ENCODE measurements at regions of chr17 and their contacts with region 1.

Region 1: GRCh38 chr17:43360739-43361505 is 37.9 kb upstream of the ARL4D start:
- DNase-seq: peak; percentile 74 to 99 (median 86)
- ATAC-seq: peak; percentile 75
- H3K4me3 ChIP-seq: peak overlapping the region; percentile 63
- H3K4me3 Mint-ChIP-seq: peak overlapping the region; percentile 93
- H3K27ac ChIP-seq: peak overlapping the region; percentile 94 to 96
- H3K27ac Mint-ChIP-seq: peak overlapping the region; percentile 97
- H3K4me1 ChIP-seq: peaks cover 22% of the 10 kb centered on the region
- H3K4me1 Mint-ChIP-seq: peaks cover 15% of the 10 kb centered on the region
- H3K27me3 ChIP-seq: no peaks in the 10 kb centered on the region
- H3K27me3 Mint-ChIP-seq: peaks cover 5% of the 10 kb centered on the region
- CTCF ChIP-seq: no peak

Region 2: DNA sequence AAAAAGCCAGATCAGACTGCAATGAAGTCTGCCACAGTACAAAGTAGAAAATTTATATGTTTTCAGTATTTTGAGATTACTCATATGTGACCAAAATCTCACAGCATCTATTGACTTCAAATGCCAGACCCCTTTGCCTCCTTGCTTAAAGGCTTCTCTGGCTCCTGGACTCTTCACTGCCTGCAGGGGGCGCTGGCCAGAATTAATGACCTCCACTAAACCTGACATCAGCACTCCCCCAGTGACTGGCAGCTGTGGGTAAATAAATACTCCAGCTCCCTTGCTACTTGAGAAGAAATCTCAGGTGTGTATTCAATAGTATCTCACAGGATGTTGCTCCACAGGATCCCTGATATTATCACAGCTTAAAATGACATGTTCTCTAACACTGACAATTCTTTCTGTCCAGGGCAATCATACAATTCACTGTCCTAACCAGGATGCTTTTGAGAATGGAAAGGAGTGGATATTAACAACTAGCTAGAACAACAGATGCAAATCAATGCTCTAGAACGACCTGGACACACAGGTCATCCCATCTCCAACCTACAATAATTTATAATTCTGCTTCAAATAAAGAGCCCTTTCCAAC is 540.9 kb before region 1 on chr17:
- CTCF ChIA-PET with region 1: interaction called, 4 read pairs
- POLR2A ChIA-PET with region 1: interaction called, 8 read pairs
- intact Hi-C with region 1: loop called in 1 of 2 experiments (anchors 10 kb)
- DNase-seq: peak; percentile 29 to 79 (median 48)
- ATAC-seq: no peak
- H3K4me3 ChIP-seq: no peak overlapping the region
- H3K4me3 Mint-ChIP-seq: peak overlapping the region; percentile 43
- H3K27ac ChIP-seq: no peak overlapping the region
- H3K27ac Mint-ChIP-seq: peak overlapping the region; percentile 49
- H3K4me1 ChIP-seq: peaks cover 22% of the 10 kb centered on the region
- H3K4me1 Mint-ChIP-seq: peaks cover 28% of the 10 kb centered on the region
- H3K27me3 ChIP-seq: no peaks in the 10 kb centered on the region
- H3K27me3 Mint-ChIP-seq: no peaks in the 10 kb centered on the region
- CTCF ChIP-seq: peak; percentile 72

Region 3: GRCh38 chr17:43024407-43025289 is 336.3 kb before region 1 on chr17 and contains the start of gene RND2:
- CTCF ChIA-PET with region 1: no interaction called
- POLR2A ChIA-PET with region 1: interaction called, 24 read pairs
- intact Hi-C with region 1: no loop called
- DNase-seq: peak; percentile 60 to 91 (median 71)
- ATAC-seq: peak; percentile 56
- H3K4me3 ChIP-seq: peak within 1 kb of the TSS; percentile 74
- H3K4me3 Mint-ChIP-seq: peak within 1 kb of the TSS; percentile 90
- H3K27ac ChIP-seq: peak within 1 kb of the TSS in 1 of 2 donors; percentile 56
- H3K27ac Mint-ChIP-seq: peak within 1 kb of the TSS; percentile 77
- H3K4me1 ChIP-seq: peaks cover 48% of the 10 kb centered on the region
- H3K4me1 Mint-ChIP-seq: peaks cover 28% of the 10 kb centered on the region
- H3K27me3 ChIP-seq: no peaks in the 10 kb centered on the region
- H3K27me3 Mint-ChIP-seq: no peaks in the 10 kb centered on the region
- CTCF ChIP-seq: peak; percentile 21
- total RNA-seq, gene RND2: 0.27 to 0.28 TPM

Region 4: GRCh38 chr17:43134774-43135453 is 226.0 kb before region 1 on chr17:
- CTCF ChIA-PET with region 1: no interaction called
- POLR2A ChIA-PET with region 1: no interaction called
- intact Hi-C with region 1: no loop called
- DNase-seq: no peak
- ATAC-seq: no peak
- H3K4me3 ChIP-seq: no peak overlapping the region
- H3K4me3 Mint-ChIP-seq: no peak overlapping the region
- H3K27ac ChIP-seq: no peak overlapping the region
- H3K27ac Mint-ChIP-seq: no peak overlapping the region
- H3K4me1 ChIP-seq: no peaks in the 10 kb centered on the region
- H3K4me1 Mint-ChIP-seq: peaks cover 11% of the 10 kb centered on the region
- H3K27me3 ChIP-seq: no peaks in the 10 kb centered on the region
- H3K27me3 Mint-ChIP-seq: no peaks in the 10 kb centered on the region
- CTCF ChIP-seq: no peak

Region 5: GRCh38 chr17:43170766-43171585 is 189.9 kb before region 1 on chr17 and contains the start of gene NBR1:
- CTCF ChIA-PET with region 1: no interaction called
- POLR2A ChIA-PET with region 1: interaction called, 18 read pairs
- intact Hi-C with region 1: no loop called
- DNase-seq: peak; percentile 90 to 99 (median 92)
- ATAC-seq: peak; percentile 76
- H3K4me3 ChIP-seq: peak within 1 kb of the TSS; percentile 71
- H3K4me3 Mint-ChIP-seq: no peak within 1 kb of the TSS
- H3K27ac ChIP-seq: peak within 1 kb of the TSS; percentile 98
- H3K27ac Mint-ChIP-seq: no peak within 1 kb of the TSS
- H3K4me1 ChIP-seq: peaks cover 47% of the 10 kb centered on the region
- H3K4me1 Mint-ChIP-seq: peaks cover 27% of the 10 kb centered on the region
- H3K27me3 ChIP-seq: no peaks in the 10 kb centered on the region
- H3K27me3 Mint-ChIP-seq: no peaks in the 10 kb centered on the region
- CTCF ChIP-seq: no peak
- total RNA-seq, gene NBR1: 23.7 TPM

Region 6: DNA sequence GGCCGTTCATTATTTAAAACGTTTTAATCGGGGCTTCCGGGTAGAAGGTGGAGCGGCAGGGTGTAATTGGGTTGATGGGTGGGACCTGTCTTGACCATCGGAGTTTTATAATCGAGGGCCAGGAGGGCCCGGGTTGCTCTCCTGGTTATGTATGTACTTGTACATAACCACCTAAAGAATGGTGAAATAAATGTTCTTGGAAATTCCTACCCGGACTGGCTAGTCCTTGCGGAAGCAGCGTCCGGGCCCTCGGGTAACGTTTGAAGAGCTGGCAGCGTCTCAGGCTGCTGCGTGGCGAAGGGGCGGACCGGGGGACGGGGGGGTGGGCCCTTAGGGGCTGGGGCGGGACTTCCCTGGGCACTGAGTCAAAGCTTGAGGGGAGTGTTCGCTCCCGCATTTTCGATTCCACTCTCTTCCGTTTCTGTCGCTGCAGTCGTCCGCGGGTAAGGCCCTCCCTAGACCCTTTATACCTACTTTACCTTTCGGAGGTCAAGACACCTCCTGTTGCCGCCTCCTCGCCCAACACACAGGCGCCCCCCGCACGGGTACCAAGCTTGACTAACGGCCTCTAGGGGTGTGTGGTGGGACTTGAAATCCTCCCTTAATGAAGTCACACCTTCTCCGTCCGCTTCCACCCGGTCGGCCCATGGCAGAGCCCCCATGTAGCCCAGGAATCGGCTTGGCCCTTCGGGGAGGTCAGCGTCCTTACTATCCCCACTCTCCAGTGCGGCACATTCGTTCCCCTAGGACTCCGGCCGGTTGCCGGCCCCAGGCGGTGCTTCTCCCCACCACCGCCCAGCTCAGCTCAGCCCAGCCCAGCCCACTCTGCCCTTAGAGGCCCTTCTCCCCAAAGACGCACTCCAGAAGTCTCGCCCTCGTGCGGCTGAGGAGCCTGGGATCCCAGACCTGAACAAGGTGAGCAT is 149.2 kb before region 1 on chr17 and contains the start of gene TMEM106A:
- CTCF ChIA-PET with region 1: no interaction called
- POLR2A ChIA-PET with region 1: interaction called, 27 read pairs
- intact Hi-C with region 1: no loop called
- DNase-seq: peak; percentile 56 to 88 (median 68)
- ATAC-seq: peak; percentile 90
- H3K4me3 ChIP-seq: peak within 1 kb of the TSS; percentile 69
- H3K4me3 Mint-ChIP-seq: peak within 1 kb of the TSS; percentile 98
- H3K27ac ChIP-seq: peak within 1 kb of the TSS; percentile 72 to 77
- H3K27ac Mint-ChIP-seq: peak within 1 kb of the TSS; percentile 89
- H3K4me1 ChIP-seq: peaks cover 22% of the 10 kb centered on the region
- H3K4me1 Mint-ChIP-seq: peaks cover 38% of the 10 kb centered on the region
- H3K27me3 ChIP-seq: no peaks in the 10 kb centered on the region
- H3K27me3 Mint-ChIP-seq: no peaks in the 10 kb centered on the region
- CTCF ChIP-seq: peak; percentile 61
- total RNA-seq, gene TMEM106A: 6.3 to 6.4 TPM

Region 7: GRCh38 chr17:43388359-43389045 is 27.6 kb after region 1 on chr17:
- CTCF ChIA-PET with region 1: interaction called, 11 read pairs
- POLR2A ChIA-PET with region 1: interaction called, 175 read pairs
- intact Hi-C with region 1: loop called in 1 of 2 experiments (anchors 1 kb)
- DNase-seq: peak; percentile 84 to 95 (median 90)
- ATAC-seq: peak; percentile 70
- H3K4me3 ChIP-seq: peak overlapping the region; percentile 71
- H3K4me3 Mint-ChIP-seq: peak overlapping the region; percentile 93
- H3K27ac ChIP-seq: peak overlapping the region; percentile 94 to 97
- H3K27ac Mint-ChIP-seq: peak overlapping the region; percentile 97
- H3K4me1 ChIP-seq: peaks cover 27% of the 10 kb centered on the region
- H3K4me1 Mint-ChIP-seq: peaks cover 36% of the 10 kb centered on the region
- H3K27me3 ChIP-seq: no peaks in the 10 kb centered on the region
- H3K27me3 Mint-ChIP-seq: no peaks in the 10 kb centered on the region
- CTCF ChIP-seq: no peak

Region 8: DNA sequence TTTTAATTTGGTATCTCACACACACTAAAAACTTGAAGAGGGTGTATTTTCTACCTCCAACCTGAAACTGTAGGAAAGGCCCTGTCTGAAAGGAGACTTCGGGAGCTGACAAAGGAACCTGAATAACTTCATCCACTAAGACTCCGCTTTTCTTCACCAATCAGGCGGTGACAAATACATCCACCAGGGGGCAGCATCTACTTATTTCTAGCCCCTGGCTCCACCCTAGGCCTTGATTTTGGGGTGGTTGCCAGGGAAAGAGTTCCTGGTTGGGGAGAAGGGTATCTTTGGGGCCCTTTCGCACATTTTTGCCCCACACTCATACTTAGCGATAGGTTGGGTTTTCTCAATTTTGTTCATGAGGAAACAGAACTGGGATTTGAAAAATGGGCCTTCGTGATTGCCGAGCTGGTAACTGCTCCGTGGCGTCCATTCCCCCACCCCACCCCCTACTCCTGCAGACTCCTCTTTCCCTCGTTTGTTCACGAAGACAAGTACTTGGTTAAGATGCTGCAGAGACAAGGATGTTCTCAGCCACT is 33.1 kb after region 1 on chr17:
- CTCF ChIA-PET with region 1: interaction called, 11 read pairs
- POLR2A ChIA-PET with region 1: interaction called, 175 read pairs
- intact Hi-C with region 1: loop called in 1 of 2 experiments (anchors 5 kb)
- DNase-seq: peak; percentile 77 to 94 (median 89)
- ATAC-seq: peak; percentile 27
- H3K4me3 ChIP-seq: no peak overlapping the region
- H3K4me3 Mint-ChIP-seq: peak overlapping the region; percentile 49
- H3K27ac ChIP-seq: peak overlapping the region in 1 of 2 donors; percentile 14
- H3K27ac Mint-ChIP-seq: peak overlapping the region; percentile 16
- H3K4me1 ChIP-seq: peaks cover 40% of the 10 kb centered on the region
- H3K4me1 Mint-ChIP-seq: peaks cover 37% of the 10 kb centered on the region
- H3K27me3 ChIP-seq: no peaks in the 10 kb centered on the region
- H3K27me3 Mint-ChIP-seq: no peaks in the 10 kb centered on the region
- CTCF ChIP-seq: peak; percentile 90

Measured in CD4-positive, alpha-beta T cell (primary cell).